Lower leg skin (tissue), 4 donors: ENCODE measurements at regions of chr22 and their contacts with region 1.

Region 1: DNA sequence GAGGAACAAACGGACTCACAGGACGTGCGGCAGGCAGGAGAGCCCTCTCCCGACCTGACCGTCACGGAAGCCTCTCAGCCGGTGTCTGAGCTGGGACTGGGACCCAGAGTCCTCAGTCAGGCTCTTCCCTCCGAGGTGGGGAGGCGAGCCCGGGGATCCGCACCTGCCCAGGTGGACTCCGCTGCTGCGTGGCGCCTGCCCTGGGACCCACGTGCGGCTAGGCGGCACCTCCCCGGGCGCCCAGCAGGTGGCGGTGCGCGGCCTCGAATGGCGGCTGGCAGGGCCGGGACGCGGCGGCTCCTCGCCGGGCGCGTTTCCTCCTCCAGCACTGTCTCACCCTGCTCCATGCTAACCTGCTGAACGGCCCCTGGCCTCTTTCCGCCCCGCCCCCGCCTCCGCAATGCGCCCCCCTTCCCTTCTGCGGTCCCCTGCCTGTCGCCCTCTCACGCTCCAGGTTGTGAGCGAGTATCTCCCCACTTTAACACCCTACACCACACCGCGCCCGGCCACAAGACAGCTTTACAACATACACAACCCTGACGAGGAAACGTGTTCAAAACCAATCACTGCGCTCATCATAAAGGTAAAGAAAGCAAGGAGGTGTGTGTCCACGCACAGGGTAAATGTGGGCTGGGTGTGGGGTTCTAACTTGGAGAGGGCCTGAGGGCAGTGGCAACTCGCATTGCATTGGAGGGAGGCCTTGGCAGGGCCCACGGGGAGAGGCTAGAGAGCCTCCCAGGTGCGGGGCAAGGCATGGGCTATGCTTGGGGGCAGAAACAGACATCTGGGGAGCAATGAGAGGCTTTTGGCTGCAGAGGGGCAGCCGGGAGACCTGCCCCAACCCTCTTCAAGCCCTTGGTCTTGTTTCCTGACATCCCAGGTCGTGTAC is 25.9 kb upstream of the ATXN10 start:
- DNase-seq: peak; percentile 35 to 94
- H3K4me3 ChIP-seq: no peak overlapping the region
- CTCF ChIP-seq: peak in 1 of 3 donors; percentile 46
- POLR2A ChIP-seq: no peak

Region 2: GRCh38 chr22:45502215-45503049 is 143.3 kb before region 1 on chr22 and contains the start of gene FBLN1:
- intact Hi-C with region 1: no loop called
- DNase-seq: no peak
- H3K4me3 ChIP-seq: peak within 1 kb of the TSS; percentile 52
- CTCF ChIP-seq: no peak
- POLR2A ChIP-seq: no peak
- total RNA-seq, gene FBLN1: 114 to 414 (median 163) TPM

Region 3: GRCh38 chr22:45577746-45578523 is 67.8 kb before region 1 on chr22:
- intact Hi-C with region 1: loop called (anchors 5 kb)
- DNase-seq: peak; percentile 78 to 96
- H3K4me3 ChIP-seq: no peak overlapping the region
- CTCF ChIP-seq: peak in 2 of 3 donors; percentile 59 to 67
- POLR2A ChIP-seq: no peak

Region 4: GRCh38 chr22:45612451-45612901 is 33.3 kb before region 1 on chr22:
- intact Hi-C with region 1: no loop called
- DNase-seq: peak; percentile 66 to 93
- H3K4me3 ChIP-seq: no peak overlapping the region
- CTCF ChIP-seq: no peak
- POLR2A ChIP-seq: no peak